Activated CD4-positive, alpha-beta T cell treated with anti-CD3 and anti-CD28 coated beads, Interleukin-2, amount 10 ng/mL, durations not matched to agents 7 days and 5 days (primary cell): ENCODE measurements at regions of chr14 and their contacts with region 1.

Region 1: GRCh38 chr14:22900081-22900799 is 17.2 kb downstream of the REM2 start:
- DNase-seq: peak; percentile 75
- H3K4me3 Mint-ChIP-seq: no peak overlapping the region
- H3K27ac Mint-ChIP-seq: peak overlapping the region; percentile 7
- H3K4me1 Mint-ChIP-seq: peaks cover 23% of the 10 kb centered on the region
- H3K27me3 Mint-ChIP-seq: no peaks in the 10 kb centered on the region

Region 2: GRCh38 chr14:22630486-22630885 is 269.8 kb before region 1 on chr14:
- CTCF ChIA-PET with region 1: no interaction called
- POLR2A ChIA-PET with region 1: no interaction called
- DNase-seq: no peak
- H3K4me3 Mint-ChIP-seq: no peak overlapping the region
- H3K27ac Mint-ChIP-seq: no peak overlapping the region
- H3K4me1 Mint-ChIP-seq: no peaks in the 10 kb centered on the region
- H3K27me3 Mint-ChIP-seq: peaks cover 10% of the 10 kb centered on the region

Region 3: GRCh38 chr14:22872033-22872832 is 28.0 kb before region 1 on chr14:
- CTCF ChIA-PET with region 1: interaction called, 10 read pairs
- POLR2A ChIA-PET with region 1: no interaction called
- DNase-seq: peak; percentile 76
- H3K4me3 Mint-ChIP-seq: peak overlapping the region; percentile 89
- H3K27ac Mint-ChIP-seq: peak overlapping the region; percentile 99
- H3K4me1 Mint-ChIP-seq: peaks cover 26% of the 10 kb centered on the region
- H3K27me3 Mint-ChIP-seq: no peaks in the 10 kb centered on the region

Region 4: GRCh38 chr14:22918804-22919600 is 18.8 kb after region 1 on chr14 and contains the start of gene RBM23:
- CTCF ChIA-PET with region 1: interaction called, 11 read pairs
- POLR2A ChIA-PET with region 1: no interaction called
- DNase-seq: peak; percentile 100
- H3K4me3 Mint-ChIP-seq: peak within 1 kb of the TSS; percentile 91
- H3K27ac Mint-ChIP-seq: peak within 1 kb of the TSS; percentile 100
- H3K4me1 Mint-ChIP-seq: peaks cover 45% of the 10 kb centered on the region
- H3K27me3 Mint-ChIP-seq: no peaks in the 10 kb centered on the region
- total RNA-seq, gene RBM23: 79.0 to 79.6 TPM